ENCODE measurements at regions of chr11 and their contacts with region 1.

Region 1: GRCh38 chr11:46529095-46529905 is 64.5 kb downstream of the AMBRA1 start:
- DNase-seq: peak in 5 of 6 donors; percentile 29 to 73 (median 55)
- ATAC-seq: peak; percentile 75 to 94 (median 90)
- H3K4me3 ChIP-seq: no peak overlapping the region
- H3K27ac ChIP-seq: no peak overlapping the region
- H3K4me1 ChIP-seq: peaks cover 0 to 2% (median 0%) of the 10 kb centered on the region in 3 donors
- H3K27me3 ChIP-seq: no peaks in the 10 kb centered on the region
- CTCF ChIP-seq: peak; percentile 77 to 94 (median 82)

Region 2: GRCh38 chr11:46367244-46367915 is 161.9 kb before region 1 on chr11:
- intact Hi-C with region 1: no loop called
- DNase-seq: peak; percentile 51 to 89 (median 67)
- ATAC-seq: peak; percentile 69 to 85 (median 76)
- H3K4me3 ChIP-seq: no peak overlapping the region
- H3K27ac ChIP-seq: no peak overlapping the region
- H3K4me1 ChIP-seq: peaks cover 0 to 11% (median 0%) of the 10 kb centered on the region in 3 donors
- H3K27me3 ChIP-seq: no peaks in the 10 kb centered on the region
- CTCF ChIP-seq: peak; percentile 81 to 91 (median 86)

Region 3: GRCh38 chr11:46389450-46390253 is 139.6 kb before region 1 on chr11:
- intact Hi-C with region 1: loop called in 1 of 3 experiments (anchors 5 kb)
- DNase-seq: peak; percentile 61 to 92 (median 75)
- ATAC-seq: peak; percentile 67 to 85 (median 74)
- H3K4me3 ChIP-seq: peak overlapping the region; percentile 23 to 55 (median 31)
- H3K27ac ChIP-seq: no peak overlapping the region
- H3K4me1 ChIP-seq: peaks cover 0 to 9% (median 6%) of the 10 kb centered on the region in 3 donors
- H3K27me3 ChIP-seq: peaks cover 0 to 26% (median 3%) of the 10 kb centered on the region in 4 donors
- CTCF ChIP-seq: peak; percentile 66 to 86 (median 77)

Measured in pancreas (tissue), 10 donors.